Heart right ventricle (tissue), 16 donors: ENCODE measurements at regions of chr13 and their contacts with region 1.

Region 1: DNA sequence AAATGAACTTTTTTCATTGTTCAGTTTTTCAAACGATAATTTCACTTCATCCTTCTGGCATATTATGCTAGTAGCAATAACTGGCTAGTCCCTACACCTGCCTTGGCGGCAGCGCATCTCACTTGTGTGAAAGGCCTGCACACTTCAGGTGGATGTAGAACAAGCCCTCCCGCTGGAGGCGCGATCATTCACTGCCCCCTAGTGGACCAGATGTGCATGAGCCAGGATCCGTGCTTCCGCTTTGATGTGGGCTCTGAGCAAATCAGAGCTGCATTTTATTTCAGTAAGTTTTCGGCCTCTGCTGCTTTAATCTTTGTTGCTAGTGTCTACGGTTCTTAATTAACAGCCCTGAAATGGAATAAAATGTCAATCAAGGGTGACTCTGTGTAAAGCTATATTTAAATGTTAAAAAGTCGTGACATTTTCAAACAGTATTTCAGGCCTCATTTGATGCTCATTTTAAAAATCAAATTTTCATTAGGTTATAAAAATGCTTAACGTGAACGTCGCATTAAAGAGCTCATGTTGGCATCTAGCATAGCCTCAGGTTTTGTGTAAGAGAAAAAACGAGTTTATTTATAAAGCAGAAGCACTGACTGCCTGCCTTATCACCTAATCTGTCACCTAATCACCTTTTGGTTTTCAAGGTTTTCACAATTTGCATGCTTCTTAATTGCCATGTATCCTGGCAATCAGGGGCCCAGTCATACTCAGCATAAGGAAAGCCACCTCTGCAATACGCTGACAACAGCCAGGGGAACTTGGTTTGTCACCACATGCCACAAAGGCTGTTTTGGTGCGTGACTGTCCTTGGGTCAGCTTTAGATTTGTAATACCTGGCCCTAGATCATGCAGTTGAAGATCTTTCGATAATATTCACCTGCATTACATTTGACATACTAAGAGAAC is 112.2 kb downstream of the TEX26 start:
- DNase-seq: peak; percentile 70 to 73
- ATAC-seq: peak; percentile 73 to 92 (median 88)
- H3K4me3 ChIP-seq: no peak overlapping the region
- H3K27ac ChIP-seq: peak overlapping the region in 1 of 10 donors; percentile 79
- H3K4me1 ChIP-seq: peaks cover 3 to 34% (median 19%) of the 10 kb centered on the region in 9 donors
- H3K27me3 ChIP-seq: peaks cover 0 to 11% (median 0%) of the 10 kb centered on the region in 7 donors
- CTCF ChIP-seq: peak; percentile 88 to 98 (median 94)

Region 2: GRCh38 chr13:30355384-30355699 is 689.3 kb before region 1 on chr13:
- intact Hi-C with region 1: loop called in 1 of 10 experiments (anchors 10 kb)
- DNase-seq: peak in 1 of 2 donors; percentile 37
- ATAC-seq: peak in 7 of 8 donors; percentile 63 to 87 (median 79)
- H3K4me3 ChIP-seq: no peak overlapping the region
- H3K27ac ChIP-seq: no peak overlapping the region
- H3K4me1 ChIP-seq: peaks cover 0 to 11% (median 0%) of the 10 kb centered on the region in 9 donors
- H3K27me3 ChIP-seq: no peaks in the 10 kb centered on the region
- CTCF ChIP-seq: peak; percentile 20 to 69 (median 60)

Region 3: DNA sequence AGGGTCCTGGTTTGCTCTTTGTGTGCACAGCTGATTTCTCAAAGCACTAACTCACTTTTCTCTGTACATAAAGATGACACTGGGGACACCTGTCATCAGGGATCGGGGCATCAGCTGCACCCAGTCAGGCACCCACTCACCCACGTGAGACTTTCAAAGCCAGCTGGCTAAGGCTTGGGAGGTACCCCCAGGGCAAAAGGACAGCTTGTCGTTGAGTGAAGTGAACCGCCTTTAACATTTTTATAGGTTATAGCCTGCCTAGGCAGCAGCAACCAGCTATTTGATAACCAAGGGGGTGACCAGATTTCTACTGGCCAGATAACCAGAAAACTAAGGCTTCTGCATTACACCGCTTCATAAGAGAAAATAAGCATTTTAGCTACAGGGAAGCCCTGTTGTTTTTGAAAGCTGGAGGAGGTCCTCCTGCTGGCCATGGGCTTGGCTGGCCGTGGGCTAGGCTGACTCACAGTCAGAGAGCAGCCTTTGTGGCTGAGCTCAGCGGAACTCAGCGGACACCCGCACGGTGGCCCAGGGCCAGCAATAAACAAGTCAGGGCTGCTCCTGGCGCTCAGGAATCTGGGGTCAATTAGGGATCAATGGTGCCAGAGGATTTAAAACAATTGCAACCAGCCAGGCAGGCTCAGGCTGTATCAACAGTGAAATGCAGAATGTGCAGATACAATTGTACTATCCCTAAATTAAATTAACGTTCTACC is 252.2 kb before region 1 on chr13:
- intact Hi-C with region 1: loop called in 1 of 10 experiments (anchors 5 kb)
- DNase-seq: peak; percentile 56 to 71
- ATAC-seq: peak; percentile 81 to 91 (median 88)
- H3K4me3 ChIP-seq: no peak overlapping the region
- H3K27ac ChIP-seq: peak overlapping the region in 6 of 10 donors; percentile 21 to 75 (median 41)
- H3K4me1 ChIP-seq: peaks cover 0 to 32% (median 7%) of the 10 kb centered on the region in 9 donors
- H3K27me3 ChIP-seq: peaks cover 0 to 4% (median 0%) of the 10 kb centered on the region in 7 donors
- CTCF ChIP-seq: peak in 6 of 9 donors; percentile 14 to 43 (median 34)

Region 4: GRCh38 chr13:30865123-30866049 is 179.2 kb before region 1 on chr13:
- intact Hi-C with region 1: loop called in 5 of 10 experiments (anchors 5 to 10 kb)
- DNase-seq: peak; percentile 67 to 70
- ATAC-seq: peak; percentile 78 to 86 (median 82)
- H3K4me3 ChIP-seq: no peak overlapping the region
- H3K27ac ChIP-seq: peak overlapping the region in 8 of 10 donors; percentile 42 to 80 (median 60)
- H3K4me1 ChIP-seq: peaks cover 5 to 33% (median 18%) of the 10 kb centered on the region in 9 donors
- H3K27me3 ChIP-seq: peaks cover 0 to 7% (median 0%) of the 10 kb centered on the region in 7 donors
- CTCF ChIP-seq: peak; percentile 79 to 93 (median 90)

Region 5: DNA sequence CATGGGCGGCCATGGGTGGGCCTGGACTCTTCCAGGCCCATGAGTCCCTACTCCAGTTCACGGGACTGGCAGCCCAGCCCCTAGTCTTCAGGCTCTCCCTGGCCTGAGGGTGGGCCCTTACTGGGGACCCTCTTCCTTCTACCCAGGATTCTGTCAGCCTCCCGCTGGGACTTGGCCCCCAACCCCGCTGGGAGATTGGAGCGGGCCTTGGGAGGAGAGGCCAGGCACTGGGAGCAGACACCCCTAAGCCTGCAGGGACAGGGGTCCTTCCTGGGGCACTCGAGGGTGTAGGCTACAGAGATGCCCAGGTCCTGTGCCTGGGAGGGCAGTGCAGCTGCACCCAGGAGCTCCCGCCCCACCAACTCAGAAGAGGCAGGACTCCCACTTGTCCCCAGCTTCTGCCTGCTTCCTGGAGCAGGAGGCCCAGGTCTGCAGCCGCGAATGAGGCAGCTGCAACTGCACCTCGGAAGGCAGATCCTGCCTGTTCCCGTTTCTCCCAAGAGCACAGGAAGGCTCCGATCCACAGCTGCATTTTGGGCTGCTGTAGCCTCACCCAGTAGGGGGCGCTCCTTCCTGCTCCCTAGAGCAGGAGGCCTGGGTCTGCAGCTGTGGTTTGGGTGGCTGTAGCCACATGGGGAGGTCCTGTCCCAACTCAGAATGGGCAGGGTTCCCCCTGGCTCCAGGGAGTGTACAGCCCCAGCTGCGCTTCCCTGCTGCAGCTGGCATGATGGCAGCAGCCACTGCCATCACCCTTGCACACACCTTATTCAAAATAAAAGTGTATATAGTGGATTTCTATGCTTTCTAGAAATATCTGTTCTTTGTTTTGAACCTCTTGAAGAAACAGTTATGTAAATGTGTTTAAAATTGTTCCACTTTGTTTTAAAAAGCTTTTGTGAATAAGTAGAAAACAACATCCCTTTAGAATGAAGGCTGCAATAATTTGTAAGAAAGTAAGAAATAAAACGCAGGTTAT is 65.4 kb before region 1 on chr13:
- intact Hi-C with region 1: loop called in 1 of 10 experiments (anchors 5 kb)
- DNase-seq: peak in 1 of 2 donors; percentile 28
- ATAC-seq: peak in 3 of 8 donors; percentile 14 to 44 (median 25)
- H3K4me3 ChIP-seq: no peak overlapping the region
- H3K27ac ChIP-seq: no peak overlapping the region
- H3K4me1 ChIP-seq: peaks cover 0 to 6% (median 0%) of the 10 kb centered on the region in 9 donors
- H3K27me3 ChIP-seq: peaks cover 0 to 10% (median 0%) of the 10 kb centered on the region in 7 donors
- CTCF ChIP-seq: peak; percentile 14 to 70 (median 60)